CD4-positive, alpha-beta memory T cell (primary cell): ENCODE measurements at regions of chr12 and their contacts with region 1.

Region 1: DNA sequence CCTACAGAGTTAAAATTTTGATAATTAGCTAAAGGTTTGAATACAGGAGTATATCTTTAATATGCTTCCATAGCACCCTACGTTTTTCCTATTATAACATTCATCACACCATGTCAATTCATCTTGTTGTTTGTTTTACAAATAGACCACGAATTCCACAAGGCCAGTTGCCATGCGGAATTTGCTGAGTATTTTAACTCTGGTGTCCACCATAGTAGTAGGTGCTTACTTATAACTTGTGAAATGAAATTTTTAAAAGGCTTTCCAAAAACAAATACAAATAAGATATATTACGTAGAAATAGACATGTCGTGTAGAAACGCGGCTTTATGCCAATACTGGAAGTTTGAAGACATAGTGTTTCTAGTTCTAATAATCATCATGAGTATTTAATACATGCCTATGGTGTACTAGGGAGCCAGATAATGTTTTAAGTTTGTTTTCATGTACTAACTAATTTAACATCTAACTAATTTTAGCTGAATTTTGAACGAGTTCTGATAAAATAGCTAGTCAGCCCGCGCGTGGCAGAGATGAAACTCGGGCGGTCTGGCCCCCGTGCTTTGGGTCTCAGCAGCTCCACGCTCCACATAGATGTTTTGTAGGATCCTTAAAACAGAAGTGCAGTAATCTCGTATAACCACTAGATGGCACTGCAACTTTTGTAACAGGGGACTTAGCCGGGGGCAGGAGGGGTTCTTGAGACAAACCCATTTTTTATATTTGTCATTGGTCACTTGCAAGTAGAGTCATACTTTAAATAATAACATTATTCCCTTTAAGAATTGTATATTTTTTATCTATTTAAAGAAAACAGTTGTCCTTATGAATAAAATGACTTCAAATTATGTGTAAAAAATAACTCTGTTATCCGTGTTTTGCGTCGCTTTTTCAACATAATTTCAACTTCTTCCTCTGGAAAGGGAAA is 10.2 kb downstream of the CD69 start:
- DNase-seq: peak; percentile 67 to 75 (median 72)
- H3K4me3 ChIP-seq: no peak overlapping the region
- H3K4me3 Mint-ChIP-seq: peak overlapping the region; percentile 37 to 78 (median 72)
- H3K27ac ChIP-seq: peak overlapping the region; percentile 2
- H3K27ac Mint-ChIP-seq: peak overlapping the region; percentile 72 to 94 (median 85)
- H3K4me1 ChIP-seq: peaks cover 55% of the 10 kb centered on the region
- H3K4me1 Mint-ChIP-seq: peaks cover 30 to 51% (median 42%) of the 10 kb centered on the region in 4 donors
- H3K27me3 ChIP-seq: no peaks in the 10 kb centered on the region
- H3K27me3 Mint-ChIP-seq: no peaks in the 10 kb centered on the region

Region 2: GRCh38 chr12:9331218-9331626 is 419.3 kb before region 1 on chr12:
- CTCF ChIA-PET with region 1: interaction called, 10 read pairs
- POLR2A ChIA-PET with region 1: no interaction called
- intact Hi-C with region 1: loop called (anchors 2 kb)
- DNase-seq: peak in 4 of 5 donors; percentile 54 to 64 (median 61)
- H3K4me3 ChIP-seq: no peak overlapping the region
- H3K4me3 Mint-ChIP-seq: peak overlapping the region in 1 of 8 donors; percentile 45
- H3K27ac ChIP-seq: no peak overlapping the region
- H3K27ac Mint-ChIP-seq: peak overlapping the region in 2 of 7 donors; percentile 37 to 76
- H3K4me1 ChIP-seq: peaks cover 5% of the 10 kb centered on the region
- H3K4me1 Mint-ChIP-seq: peaks cover 5 to 22% (median 10%) of the 10 kb centered on the region in 4 donors
- H3K27me3 ChIP-seq: no peaks in the 10 kb centered on the region
- H3K27me3 Mint-ChIP-seq: no peaks in the 10 kb centered on the region

Region 3: GRCh38 chr12:9760699-9761418 is 10.3 kb after region 1 on chr12 and contains the start of gene CD69:
- CTCF ChIA-PET with region 1: interaction called, 157 read pairs
- POLR2A ChIA-PET with region 1: interaction called, 189 read pairs
- intact Hi-C with region 1: loop called (anchors 1 kb)
- DNase-seq: peak; percentile 87 to 93 (median 90)
- H3K4me3 ChIP-seq: peak within 1 kb of the TSS; percentile 71 to 80
- H3K4me3 Mint-ChIP-seq: peak within 1 kb of the TSS; percentile 87 to 100 (median 98)
- H3K27ac ChIP-seq: peak within 1 kb of the TSS; percentile 98
- H3K27ac Mint-ChIP-seq: peak within 1 kb of the TSS; percentile 98 to 100 (median 100)
- H3K4me1 ChIP-seq: peaks cover 59% of the 10 kb centered on the region
- H3K4me1 Mint-ChIP-seq: peaks cover 42 to 70% (median 51%) of the 10 kb centered on the region in 4 donors
- H3K27me3 ChIP-seq: no peaks in the 10 kb centered on the region
- H3K27me3 Mint-ChIP-seq: no peaks in the 10 kb centered on the region
- total RNA-seq, gene CD69: 31.0 to 35.9 TPM

Region 4: GRCh38 chr12:9782547-9783382 is 32.2 kb after region 1 on chr12:
- CTCF ChIA-PET with region 1: interaction called, 45 read pairs
- POLR2A ChIA-PET with region 1: interaction called, 9 read pairs
- intact Hi-C with region 1: no loop called
- DNase-seq: no peak
- H3K4me3 ChIP-seq: no peak overlapping the region
- H3K4me3 Mint-ChIP-seq: peak overlapping the region in 1 of 8 donors; percentile 36
- H3K27ac ChIP-seq: no peak overlapping the region
- H3K27ac Mint-ChIP-seq: peak overlapping the region in 2 of 7 donors; percentile 39 to 46
- H3K4me1 ChIP-seq: peaks cover 18% of the 10 kb centered on the region
- H3K4me1 Mint-ChIP-seq: peaks cover 25 to 56% (median 46%) of the 10 kb centered on the region in 4 donors
- H3K27me3 ChIP-seq: no peaks in the 10 kb centered on the region
- H3K27me3 Mint-ChIP-seq: no peaks in the 10 kb centered on the region

Region 5: DNA sequence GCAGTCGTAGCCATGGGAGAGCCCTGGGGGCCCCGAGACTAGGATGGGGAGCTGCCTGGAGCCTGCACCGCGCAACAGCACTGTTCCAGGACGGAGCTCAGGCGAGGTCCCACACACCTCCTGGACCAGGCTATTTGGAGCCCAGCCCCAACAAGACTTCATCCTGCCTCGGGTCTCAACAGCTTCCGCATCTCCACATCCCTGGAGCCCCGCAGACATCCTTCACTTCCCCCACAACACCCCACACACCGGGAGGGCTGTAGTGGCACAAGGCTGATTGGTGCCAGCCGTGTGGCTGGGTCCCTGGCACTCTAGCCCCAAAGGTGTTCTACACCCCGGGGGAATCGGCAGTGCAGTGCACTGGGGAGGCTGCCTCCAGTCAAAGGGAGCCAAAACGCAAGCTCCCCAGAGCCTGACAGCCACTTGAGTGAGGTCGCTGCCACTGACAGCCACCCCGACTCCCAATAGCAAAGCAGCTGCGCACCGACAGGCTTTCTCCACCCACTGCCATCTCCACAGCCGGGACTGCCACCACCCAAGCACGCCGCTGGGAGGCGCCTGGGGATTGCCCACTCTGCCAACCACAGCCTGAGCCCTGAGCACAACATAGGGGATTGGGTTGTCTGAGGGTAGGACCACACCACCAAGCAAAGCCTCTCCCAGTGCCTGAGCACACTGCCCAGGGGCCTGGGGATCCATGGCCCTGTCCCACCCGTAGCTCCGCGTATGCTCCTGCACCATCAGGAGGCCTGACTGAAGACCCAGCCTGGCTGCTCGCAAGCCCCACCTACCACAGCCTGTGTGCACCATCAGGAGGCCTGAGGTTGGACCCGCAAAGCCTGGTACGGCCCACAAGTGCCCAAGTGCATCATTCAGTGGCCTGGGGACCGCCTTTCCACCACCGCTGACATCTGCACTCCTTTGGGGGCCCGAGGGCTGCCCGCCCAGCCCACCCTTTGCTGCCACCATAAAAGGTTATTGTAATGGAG is 63.6 kb after region 1 on chr12:
- CTCF ChIA-PET with region 1: interaction called, 99 read pairs
- POLR2A ChIA-PET with region 1: interaction called, 17 read pairs
- intact Hi-C with region 1: loop called (anchors 1 kb)
- DNase-seq: peak; percentile 86 to 90 (median 89)
- H3K4me3 ChIP-seq: peak overlapping the region; percentile 54 to 57
- H3K4me3 Mint-ChIP-seq: peak overlapping the region; percentile 81 to 94 (median 86)
- H3K27ac ChIP-seq: peak overlapping the region; percentile 33
- H3K27ac Mint-ChIP-seq: peak overlapping the region in 6 of 7 donors; percentile 32 to 84 (median 68)
- H3K4me1 ChIP-seq: peaks cover 7% of the 10 kb centered on the region
- H3K4me1 Mint-ChIP-seq: peaks cover 4 to 10% (median 8%) of the 10 kb centered on the region in 4 donors
- H3K27me3 ChIP-seq: no peaks in the 10 kb centered on the region
- H3K27me3 Mint-ChIP-seq: peaks cover 12% of the 10 kb centered on the region in 2 donors

Region 6: DNA sequence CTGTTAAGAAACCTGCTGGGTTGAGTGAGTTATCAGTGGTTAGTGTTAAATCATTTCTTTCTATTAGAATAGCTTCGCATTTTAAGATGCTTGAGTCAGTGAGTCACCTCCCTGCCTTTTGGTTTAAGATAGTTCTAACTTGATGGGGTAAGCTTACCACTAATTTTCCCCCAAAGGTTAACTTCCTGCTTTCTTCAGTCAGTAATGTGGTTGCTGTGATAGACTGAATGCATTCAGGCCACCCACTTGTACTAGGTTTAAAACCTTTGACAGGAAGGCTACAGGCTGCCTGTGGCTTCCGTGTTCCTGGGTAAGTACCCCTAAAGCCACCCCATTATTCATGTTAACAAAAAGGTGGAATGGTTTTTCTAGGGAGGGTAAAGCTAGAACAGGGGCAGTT is 156.3 kb after region 1 on chr12:
- CTCF ChIA-PET with region 1: interaction called, 29 read pairs
- POLR2A ChIA-PET with region 1: interaction called, 4 read pairs
- intact Hi-C with region 1: no loop called
- DNase-seq: peak; percentile 42 to 63 (median 54)
- H3K4me3 ChIP-seq: no peak overlapping the region
- H3K4me3 Mint-ChIP-seq: peak overlapping the region in 7 of 8 donors; percentile 18 to 63 (median 47)
- H3K27ac ChIP-seq: no peak overlapping the region
- H3K27ac Mint-ChIP-seq: peak overlapping the region; percentile 18 to 86 (median 76)
- H3K4me1 ChIP-seq: peaks cover 22% of the 10 kb centered on the region
- H3K4me1 Mint-ChIP-seq: peaks cover 18 to 29% (median 25%) of the 10 kb centered on the region in 4 donors
- H3K27me3 ChIP-seq: no peaks in the 10 kb centered on the region
- H3K27me3 Mint-ChIP-seq: no peaks in the 10 kb centered on the region

Region 7: DNA sequence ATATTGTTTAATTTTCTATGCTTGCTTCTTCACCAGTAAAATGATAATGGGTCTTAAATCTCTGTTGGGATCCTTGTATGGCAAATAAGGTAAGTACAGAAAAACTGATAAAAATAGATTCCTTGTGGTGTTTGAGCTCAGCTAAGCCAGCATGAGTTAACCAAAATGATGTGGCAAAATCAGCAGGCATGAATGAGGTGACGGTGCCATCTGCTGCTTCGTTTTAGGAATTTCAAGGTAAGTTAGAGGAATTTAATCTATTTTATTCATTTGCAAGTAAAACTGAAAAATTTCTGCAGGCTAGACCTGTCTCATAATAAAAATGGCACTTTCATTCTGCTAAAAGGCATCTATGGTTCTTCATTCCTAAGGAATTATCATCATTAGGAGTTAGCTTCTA is 389.5 kb after region 1 on chr12:
- CTCF ChIA-PET with region 1: interaction called, 27 read pairs
- POLR2A ChIA-PET with region 1: no interaction called
- intact Hi-C with region 1: loop called (anchors 1 kb)
- DNase-seq: peak; percentile 35 to 53 (median 39)
- H3K4me3 ChIP-seq: no peak overlapping the region
- H3K4me3 Mint-ChIP-seq: no peak overlapping the region
- H3K27ac ChIP-seq: no peak overlapping the region
- H3K27ac Mint-ChIP-seq: no peak overlapping the region
- H3K4me1 ChIP-seq: no peaks in the 10 kb centered on the region
- H3K4me1 Mint-ChIP-seq: no peaks in the 10 kb centered on the region
- H3K27me3 ChIP-seq: no peaks in the 10 kb centered on the region
- H3K27me3 Mint-ChIP-seq: peaks cover 4 to 9% of the 10 kb centered on the region in 2 donors